Caco-2 (cell line): ENCODE measurements at regions of chr4 and their contacts with region 1.

Region 1: GRCh38 chr4:138222046-138222445 is 20.1 kb downstream of the SLC7A11 start:
- DNase-seq: no peak
- H3K4me3 ChIP-seq: no peak overlapping the region
- H3K4me3 Mint-ChIP-seq: no peak overlapping the region
- H3K27ac Mint-ChIP-seq: no peak overlapping the region
- H3K4me1 ChIP-seq: peaks cover 1% of the 10 kb centered on the region; the same call in 1 of the 2 replicates
- H3K4me1 Mint-ChIP-seq: peaks cover 8% of the 10 kb centered on the region
- H3K27me3 ChIP-seq: no peaks in the 10 kb centered on the region
- H3K27me3 Mint-ChIP-seq: no peaks in the 10 kb centered on the region
- CTCF ChIP-seq: no peak

Region 2: GRCh38 chr4:138199568-138200235 is 22.3 kb before region 1 on chr4:
- CTCF ChIA-PET with region 1: no interaction called
- POLR2A ChIA-PET with region 1: no interaction called
- intact Hi-C with region 1: loop called (anchors 2 kb)
- DNase-seq: peak; percentile 77 to 83
- H3K4me3 ChIP-seq: no peak overlapping the region
- H3K4me3 Mint-ChIP-seq: peak overlapping the region; percentile 56
- H3K27ac Mint-ChIP-seq: peak overlapping the region; percentile 79
- H3K4me1 ChIP-seq: peaks cover 27% of the 10 kb centered on the region
- H3K4me1 Mint-ChIP-seq: peaks cover 33% of the 10 kb centered on the region
- H3K27me3 ChIP-seq: no peaks in the 10 kb centered on the region
- H3K27me3 Mint-ChIP-seq: no peaks in the 10 kb centered on the region
- CTCF ChIP-seq: no peak

Region 3: DNA sequence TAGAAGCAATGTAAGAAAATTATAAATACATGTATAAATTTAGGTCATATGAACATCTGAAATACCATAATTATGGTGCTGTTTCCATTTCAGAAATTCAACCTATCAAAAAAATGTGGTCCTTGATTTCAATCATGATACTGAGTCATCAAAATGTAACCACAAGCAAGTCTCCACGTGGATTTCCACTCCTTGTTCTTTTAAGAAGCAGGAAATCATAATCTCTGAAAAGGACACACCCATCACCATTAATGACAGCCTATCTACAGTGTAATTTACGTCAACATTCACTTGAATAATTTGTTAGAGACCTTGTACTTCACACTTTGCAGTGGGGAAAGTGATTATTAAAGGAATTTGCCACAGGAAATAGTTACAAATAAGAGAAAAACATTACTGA is 37.8 kb after region 1 on chr4:
- CTCF ChIA-PET with region 1: no interaction called
- POLR2A ChIA-PET with region 1: no interaction called
- intact Hi-C with region 1: no loop called
- DNase-seq: no peak
- H3K4me3 ChIP-seq: no peak overlapping the region
- H3K4me3 Mint-ChIP-seq: no peak overlapping the region
- H3K27ac Mint-ChIP-seq: no peak overlapping the region
- H3K4me1 ChIP-seq: peaks cover 32% of the 10 kb centered on the region
- H3K4me1 Mint-ChIP-seq: peaks cover 16% of the 10 kb centered on the region
- H3K27me3 ChIP-seq: no peaks in the 10 kb centered on the region
- H3K27me3 Mint-ChIP-seq: no peaks in the 10 kb centered on the region
- CTCF ChIP-seq: no peak

Region 4: DNA sequence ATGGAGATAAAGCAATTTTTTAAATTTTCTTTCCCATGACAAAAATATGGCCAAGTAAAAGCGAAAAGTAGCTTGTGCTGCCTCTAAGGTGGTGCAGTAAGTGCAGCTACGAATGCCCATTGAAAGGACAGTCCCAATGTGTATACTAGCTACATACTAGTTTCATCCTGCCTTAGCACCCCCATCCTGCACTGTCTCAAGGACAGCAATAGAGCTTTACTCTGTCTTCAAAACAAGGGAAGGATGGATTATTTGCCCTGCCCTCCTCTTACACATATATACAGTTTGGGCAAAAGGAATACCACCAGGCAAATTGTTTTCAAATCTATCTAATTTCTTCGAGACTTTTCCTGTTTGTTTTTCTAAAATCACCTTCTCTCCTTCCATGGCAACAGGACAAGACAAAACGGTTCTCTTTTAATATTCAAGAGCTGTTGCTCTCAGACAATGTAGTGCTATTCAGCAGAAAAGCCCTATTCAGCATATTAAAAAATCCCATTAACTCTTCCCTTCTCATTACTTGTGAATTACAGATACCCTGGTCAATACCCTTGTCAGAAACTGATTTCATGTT is 95.2 kb after region 1 on chr4:
- CTCF ChIA-PET with region 1: no interaction called
- POLR2A ChIA-PET with region 1: no interaction called
- intact Hi-C with region 1: no loop called
- DNase-seq: no peak
- H3K4me3 ChIP-seq: no peak overlapping the region
- H3K4me3 Mint-ChIP-seq: no peak overlapping the region
- H3K27ac Mint-ChIP-seq: no peak overlapping the region
- H3K4me1 ChIP-seq: no peaks in the 10 kb centered on the region
- H3K4me1 Mint-ChIP-seq: no peaks in the 10 kb centered on the region
- H3K27me3 ChIP-seq: no peaks in the 10 kb centered on the region
- H3K27me3 Mint-ChIP-seq: peaks cover 8% of the 10 kb centered on the region
- CTCF ChIP-seq: no peak